Activated B cell treated with CpG ODN at 0.5 μM for 24 hours (primary cell): ENCODE measurements at regions of chr5 and their contacts with region 1.

Region 1: DNA sequence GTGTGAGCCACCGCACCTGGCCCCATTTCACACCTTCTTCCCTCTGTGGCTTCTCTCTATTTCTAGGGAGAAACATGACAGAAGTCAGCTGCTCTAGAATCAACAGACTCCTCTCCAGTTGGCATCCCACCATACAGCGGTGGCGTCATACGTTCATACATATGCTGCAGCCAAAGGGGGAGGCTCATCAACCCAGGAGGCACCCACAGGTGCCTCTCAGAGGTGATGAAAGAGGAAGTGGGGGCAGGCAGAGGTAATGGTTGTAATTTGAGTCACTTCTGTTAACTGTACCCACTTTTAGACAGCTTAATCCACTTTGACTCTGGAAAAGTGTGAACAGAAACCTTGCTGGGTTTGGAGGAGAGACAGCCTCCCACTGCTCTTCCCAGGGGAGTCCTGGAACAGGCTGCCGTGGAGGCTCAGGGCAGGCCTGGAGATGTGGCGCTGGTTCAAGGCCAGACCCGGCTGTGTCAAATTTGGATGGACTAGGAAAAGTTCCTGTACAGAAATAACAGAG is 47.3 kb upstream of the SUB1 start:
- DNase-seq: peak; percentile 33
- ATAC-seq: peak; percentile 93
- H3K4me3 Mint-ChIP-seq: peak overlapping the region; percentile 56
- H3K27ac Mint-ChIP-seq: peak overlapping the region; percentile 81
- H3K4me1 Mint-ChIP-seq: peaks cover 70% of the 10 kb centered on the region
- H3K27me3 Mint-ChIP-seq: no peaks in the 10 kb centered on the region
- CTCF ChIP-seq: no peak

Region 2: DNA sequence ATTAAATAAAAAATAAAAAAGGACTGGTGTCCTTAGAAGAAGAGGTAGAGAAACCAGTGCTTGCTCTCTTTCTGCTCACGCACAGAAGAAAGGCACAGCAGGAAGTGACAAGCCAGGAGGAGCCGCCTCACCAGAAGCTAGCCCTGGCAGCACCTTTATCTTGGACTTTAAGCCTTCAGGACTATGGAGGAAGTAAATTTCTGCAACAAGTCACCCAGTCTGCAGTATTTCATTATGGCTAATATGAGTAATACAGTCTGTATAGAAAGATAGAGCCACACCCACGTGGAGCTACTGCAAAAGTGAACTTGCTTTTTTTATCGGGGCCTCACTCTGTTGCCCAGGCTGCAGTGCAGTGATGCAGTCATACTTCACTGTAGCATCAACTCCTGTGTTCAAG is 830.8 kb before region 1 on chr5:
- CTCF ChIA-PET with region 1: no interaction called
- POLR2A ChIA-PET with region 1: no interaction called
- intact Hi-C with region 1: no loop called
- DNase-seq: no peak
- ATAC-seq: no peak
- H3K4me3 Mint-ChIP-seq: no peak overlapping the region
- H3K27ac Mint-ChIP-seq: no peak overlapping the region
- H3K4me1 Mint-ChIP-seq: no peaks in the 10 kb centered on the region
- H3K27me3 Mint-ChIP-seq: peaks cover 3% of the 10 kb centered on the region
- CTCF ChIP-seq: no peak

Region 3: GRCh38 chr5:32551865-32552264 is 13.8 kb after region 1 on chr5:
- CTCF ChIA-PET with region 1: no interaction called
- POLR2A ChIA-PET with region 1: no interaction called
- intact Hi-C with region 1: loop called (anchors 2 kb)
- DNase-seq: no peak
- ATAC-seq: no peak
- H3K4me3 Mint-ChIP-seq: no peak overlapping the region
- H3K27ac Mint-ChIP-seq: no peak overlapping the region
- H3K4me1 Mint-ChIP-seq: peaks cover 17% of the 10 kb centered on the region
- H3K27me3 Mint-ChIP-seq: no peaks in the 10 kb centered on the region
- CTCF ChIP-seq: no peak

Region 4: GRCh38 chr5:32572778-32573480 is 34.8 kb after region 1 on chr5:
- CTCF ChIA-PET with region 1: no interaction called
- POLR2A ChIA-PET with region 1: interaction called, 5 read pairs
- intact Hi-C with region 1: loop called (anchors 1 kb)
- DNase-seq: no peak
- ATAC-seq: peak; percentile 91
- H3K4me3 Mint-ChIP-seq: peak overlapping the region; percentile 44
- H3K27ac Mint-ChIP-seq: peak overlapping the region; percentile 68
- H3K4me1 Mint-ChIP-seq: peaks cover 34% of the 10 kb centered on the region
- H3K27me3 Mint-ChIP-seq: no peaks in the 10 kb centered on the region
- CTCF ChIP-seq: no peak